B cell (primary cell): ENCODE measurements at regions of chr11 and their contacts with region 1.

Region 1: DNA sequence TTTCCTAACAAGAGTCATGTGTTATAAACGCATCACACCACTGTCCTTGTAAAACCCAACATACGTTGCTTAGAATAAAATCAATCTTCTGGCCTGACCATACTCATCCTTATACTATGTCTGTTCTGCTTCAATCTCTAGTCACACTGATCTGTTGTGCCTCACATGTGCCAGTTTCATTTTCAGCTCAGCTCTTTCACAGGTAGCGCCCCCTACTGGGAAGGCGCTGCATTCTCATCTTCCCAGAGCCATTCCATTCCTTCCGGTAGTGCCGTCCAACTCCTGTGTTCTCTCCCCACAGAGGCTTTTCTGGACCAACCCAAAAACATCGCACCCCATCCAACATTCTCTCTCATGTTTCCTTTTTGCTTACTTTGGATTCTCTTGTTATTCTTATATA is 22.2 kb downstream of the CASP5 start:
- DNase-seq: peak; percentile 66
- ATAC-seq: peak; percentile 60
- H3K4me3 ChIP-seq: no peak overlapping the region
- H3K4me3 Mint-ChIP-seq: no peak overlapping the region
- H3K27ac ChIP-seq: no peak overlapping the region
- H3K27ac Mint-ChIP-seq: no peak overlapping the region
- H3K4me1 ChIP-seq: no peaks in the 10 kb centered on the region
- H3K4me1 Mint-ChIP-seq: peaks cover 5% of the 10 kb centered on the region
- H3K27me3 ChIP-seq: no peaks in the 10 kb centered on the region
- H3K27me3 Mint-ChIP-seq: no peaks in the 10 kb centered on the region
- CTCF ChIP-seq: peak; percentile 72

Region 2: DNA sequence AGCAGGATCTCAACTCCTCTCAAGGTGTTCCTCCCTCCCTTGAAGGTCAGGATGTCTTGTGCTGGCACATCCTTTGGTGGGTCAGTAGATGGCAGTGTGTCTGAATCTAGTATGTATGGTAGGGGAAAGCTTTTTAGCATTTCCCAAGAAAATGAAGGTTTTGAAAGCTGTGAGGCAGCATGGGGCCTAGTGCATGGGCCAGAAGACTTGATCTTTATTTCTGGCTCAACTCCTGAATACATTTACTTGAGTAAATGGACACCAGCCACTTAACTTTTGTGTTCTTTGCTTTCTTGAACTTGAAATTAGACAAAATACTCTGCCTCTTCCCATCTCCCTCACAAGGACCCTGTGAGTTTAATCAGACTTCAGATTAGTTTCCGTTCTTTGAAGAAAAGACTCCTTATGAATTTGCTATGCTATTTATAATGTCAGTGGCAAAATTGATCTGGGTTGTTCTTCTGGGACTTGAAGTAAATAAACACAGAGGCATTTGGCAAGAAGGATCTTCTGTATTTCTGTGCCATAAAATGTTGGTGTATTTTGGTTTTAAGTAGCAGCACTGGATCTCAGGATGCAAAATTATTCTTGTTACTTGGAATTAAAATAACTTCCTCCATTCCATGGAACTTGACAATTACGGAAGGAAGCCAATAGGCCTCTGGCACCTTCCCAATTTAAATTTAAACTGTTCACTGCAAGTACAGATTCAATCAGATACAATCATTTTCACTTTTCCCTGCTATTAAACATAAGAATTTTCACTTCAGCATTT is 391.3 kb before region 1 on chr11:
- CTCF ChIA-PET with region 1: interaction called, 7 read pairs
- POLR2A ChIA-PET with region 1: no interaction called
- intact Hi-C with region 1: loop called (anchors 1 kb)
- DNase-seq: peak; percentile 60
- ATAC-seq: peak; percentile 45
- H3K4me3 ChIP-seq: no peak overlapping the region
- H3K4me3 Mint-ChIP-seq: no peak overlapping the region
- H3K27ac ChIP-seq: no peak overlapping the region
- H3K27ac Mint-ChIP-seq: no peak overlapping the region
- H3K4me1 ChIP-seq: no peaks in the 10 kb centered on the region
- H3K4me1 Mint-ChIP-seq: peaks cover 2% of the 10 kb centered on the region
- H3K27me3 ChIP-seq: no peaks in the 10 kb centered on the region
- H3K27me3 Mint-ChIP-seq: no peaks in the 10 kb centered on the region
- CTCF ChIP-seq: peak; percentile 79